Ascending aorta (tissue), 2 donors: ENCODE measurements at regions of chr5 and their contacts with region 1.

Region 1: GRCh38 chr5:149175346-149176105 is 34.2 kb downstream of the ABLIM3 start:
- DNase-seq: peak in 1 of 2 donors; percentile 72
- H3K4me3 ChIP-seq: no peak overlapping the region
- H3K27ac ChIP-seq: peak overlapping the region; percentile 77 to 79
- H3K4me1 ChIP-seq: peaks cover 12 to 17% of the 10 kb centered on the region in 2 donors
- H3K27me3 ChIP-seq: no peaks in the 10 kb centered on the region
- CTCF ChIP-seq: no peak

Region 2: DNA sequence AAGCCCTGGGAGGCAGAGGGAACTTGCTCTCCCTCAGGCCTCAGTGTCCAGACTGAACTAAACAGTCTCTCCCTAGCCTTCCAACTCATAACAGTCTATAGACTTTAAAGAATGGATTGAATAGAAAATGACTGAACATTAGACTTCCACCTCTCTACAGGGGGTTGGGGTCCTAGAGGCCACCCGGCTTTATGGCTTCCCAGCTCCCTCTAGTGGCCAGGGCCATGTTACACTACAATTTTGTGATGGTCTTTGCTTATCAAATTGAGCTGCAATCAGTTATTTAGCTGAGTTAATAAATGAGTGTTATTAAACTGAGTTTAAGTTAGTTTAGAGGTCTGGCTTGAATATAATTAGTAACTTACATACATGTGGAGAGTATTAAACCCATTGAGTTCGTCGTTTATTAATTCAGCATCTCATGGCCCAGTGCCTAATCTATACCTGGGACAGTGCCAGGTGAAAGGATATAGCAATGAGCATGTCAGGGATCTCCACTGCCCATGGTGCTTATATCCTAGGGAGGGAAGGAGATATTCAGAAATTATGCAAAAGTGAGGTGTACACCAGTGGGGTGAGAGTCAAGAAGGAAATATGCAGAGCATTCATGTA is 217.8 kb before region 1 on chr5:
- intact Hi-C with region 1: no loop called
- DNase-seq: no peak
- H3K4me3 ChIP-seq: no peak overlapping the region
- H3K27ac ChIP-seq: no peak overlapping the region
- H3K4me1 ChIP-seq: no peaks in the 10 kb centered on the region
- H3K27me3 ChIP-seq: no peaks in the 10 kb centered on the region
- CTCF ChIP-seq: peak; percentile 32 to 72 (median 53)

Region 3: DNA sequence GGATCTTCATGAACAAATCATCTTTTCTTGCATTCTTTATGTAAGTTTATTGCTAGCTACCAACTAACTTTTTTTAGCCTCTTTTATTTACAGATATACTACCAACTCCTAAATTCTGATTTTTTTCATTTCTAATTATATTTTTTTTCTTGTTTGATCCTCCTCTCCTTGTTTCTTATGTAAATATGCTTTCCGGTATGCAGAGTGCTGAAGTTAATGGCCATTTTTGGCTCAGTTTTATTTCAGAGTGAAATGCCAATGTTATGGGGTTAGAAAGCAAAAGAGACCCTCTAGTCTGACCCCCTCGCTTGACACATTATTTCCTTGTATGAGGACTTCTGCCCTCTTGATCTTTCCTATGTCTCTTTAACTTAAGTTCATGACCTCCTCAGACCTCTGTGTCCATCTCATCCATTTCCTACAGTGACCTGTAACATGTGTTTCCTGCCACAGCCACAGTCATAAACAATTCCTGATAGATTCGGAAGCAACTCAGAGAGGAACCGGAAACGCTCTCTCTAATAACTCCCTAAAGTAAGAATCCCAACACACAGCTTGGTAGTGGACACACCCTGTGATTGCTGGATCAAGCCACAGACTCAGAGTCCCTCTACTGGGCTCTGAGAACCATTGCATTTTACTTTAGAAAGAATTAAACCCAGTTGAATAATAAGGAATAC is 53.2 kb after region 1 on chr5:
- intact Hi-C with region 1: loop called (anchors 2 kb)
- DNase-seq: peak in 1 of 2 donors; percentile 74
- H3K4me3 ChIP-seq: no peak overlapping the region
- H3K27ac ChIP-seq: peak overlapping the region in 1 of 2 donors; percentile 17
- H3K4me1 ChIP-seq: peaks cover 8 to 14% of the 10 kb centered on the region in 2 donors
- H3K27me3 ChIP-seq: no peaks in the 10 kb centered on the region
- CTCF ChIP-seq: peak; percentile 55 to 82 (median 72)